Heart right ventricle (tissue), 16 donors: ENCODE measurements at regions of chr5 and their contacts with region 1.

Region 1: GRCh38 chr5:92594031-92594430 is 987.0 kb downstream of the NR2F1-AS1 start:
- DNase-seq: no peak
- ATAC-seq: no peak
- H3K4me3 ChIP-seq: no peak overlapping the region
- H3K27ac ChIP-seq: no peak overlapping the region
- H3K4me1 ChIP-seq: no peaks in the 10 kb centered on the region
- H3K27me3 ChIP-seq: no peaks in the 10 kb centered on the region
- CTCF ChIP-seq: no peak

Region 2: DNA sequence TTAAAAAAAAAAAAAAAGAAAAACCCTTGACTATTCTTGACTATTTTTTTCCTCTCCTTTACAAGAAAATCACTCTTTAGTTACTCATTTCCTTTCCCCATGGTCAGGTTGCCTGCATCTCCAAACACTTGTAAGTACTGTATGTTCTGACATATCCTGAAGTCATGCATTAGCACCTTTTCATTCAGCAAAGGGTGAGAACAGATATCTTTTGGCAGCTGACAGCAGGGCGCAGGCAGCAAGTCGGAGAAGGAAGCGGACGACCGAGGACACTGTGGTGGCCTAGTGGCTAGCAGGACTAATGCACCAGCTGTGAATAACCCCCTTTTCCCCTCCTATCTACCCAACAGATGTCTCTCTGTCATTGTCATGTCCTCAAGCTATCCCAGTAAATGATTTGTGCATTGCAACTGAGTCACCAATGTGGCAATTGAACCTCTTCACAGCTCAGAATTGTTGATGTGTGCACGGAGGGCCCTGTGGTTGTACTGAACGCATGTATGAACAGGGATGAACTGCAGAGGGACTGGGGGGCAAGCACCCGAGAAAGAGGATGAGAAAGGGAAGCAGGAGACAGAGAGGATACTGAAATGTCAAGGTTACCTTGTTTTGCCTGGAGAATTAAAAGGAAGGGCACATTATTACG is 214.9 kb before region 1 on chr5:
- intact Hi-C with region 1: no loop called
- DNase-seq: peak in 1 of 2 donors; percentile 11
- ATAC-seq: peak in 4 of 8 donors; percentile 33 to 90 (median 78)
- H3K4me3 ChIP-seq: no peak overlapping the region
- H3K27ac ChIP-seq: no peak overlapping the region
- H3K4me1 ChIP-seq: no peaks in the 10 kb centered on the region
- H3K27me3 ChIP-seq: no peaks in the 10 kb centered on the region
- CTCF ChIP-seq: no peak

Region 3: DNA sequence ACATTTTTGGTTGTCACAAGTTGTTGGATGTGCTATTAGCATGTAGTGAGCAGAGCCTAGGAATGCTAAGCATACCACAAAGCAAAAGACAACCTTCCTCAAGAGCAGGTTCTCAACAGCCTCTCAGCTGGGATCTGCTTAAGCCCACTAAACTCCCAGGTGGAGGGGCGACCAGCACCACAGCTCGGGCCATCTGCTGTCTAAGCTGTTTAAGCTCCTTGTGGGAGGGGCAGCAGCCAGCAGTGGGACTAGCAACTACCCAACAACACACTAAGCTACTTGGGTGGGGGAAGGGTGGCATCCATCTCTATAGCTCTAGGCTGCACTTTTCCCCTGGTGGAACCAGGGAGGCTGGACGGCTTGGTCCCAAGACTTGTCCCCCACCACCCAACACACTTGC is 158.2 kb before region 1 on chr5:
- intact Hi-C with region 1: no loop called
- DNase-seq: no peak
- ATAC-seq: no peak
- H3K4me3 ChIP-seq: no peak overlapping the region
- H3K27ac ChIP-seq: no peak overlapping the region
- H3K4me1 ChIP-seq: no peaks in the 10 kb centered on the region
- H3K27me3 ChIP-seq: no peaks in the 10 kb centered on the region
- CTCF ChIP-seq: no peak

Region 4: GRCh38 chr5:92552206-92553160 is 41.5 kb before region 1 on chr5:
- intact Hi-C with region 1: no loop called
- DNase-seq: no peak
- ATAC-seq: no peak
- H3K4me3 ChIP-seq: no peak overlapping the region
- H3K27ac ChIP-seq: no peak overlapping the region
- H3K4me1 ChIP-seq: no peaks in the 10 kb centered on the region
- H3K27me3 ChIP-seq: no peaks in the 10 kb centered on the region
- CTCF ChIP-seq: no peak

Region 5: GRCh38 chr5:92605591-92605990 is 11.6 kb after region 1 on chr5:
- intact Hi-C with region 1: loop called in 1 of 10 experiments (anchors 2 kb)
- DNase-seq: no peak
- ATAC-seq: no peak
- H3K4me3 ChIP-seq: no peak overlapping the region
- H3K27ac ChIP-seq: no peak overlapping the region
- H3K4me1 ChIP-seq: no peaks in the 10 kb centered on the region
- H3K27me3 ChIP-seq: no peaks in the 10 kb centered on the region
- CTCF ChIP-seq: no peak

Region 6: GRCh38 chr5:92729088-92729487 is 135.1 kb after region 1 on chr5:
- intact Hi-C with region 1: no loop called
- DNase-seq: no peak
- ATAC-seq: no peak
- H3K4me3 ChIP-seq: no peak overlapping the region
- H3K27ac ChIP-seq: no peak overlapping the region
- H3K4me1 ChIP-seq: no peaks in the 10 kb centered on the region
- H3K27me3 ChIP-seq: no peaks in the 10 kb centered on the region
- CTCF ChIP-seq: no peak